Posterior vena cava (tissue), 2 donors: ENCODE measurements at regions of chr11 and their contacts with region 1.

Region 1: GRCh38 chr11:105177658-105178057 is 38.1 kb upstream of the CARD18 start:
- DNase-seq: no peak

Region 2: DNA sequence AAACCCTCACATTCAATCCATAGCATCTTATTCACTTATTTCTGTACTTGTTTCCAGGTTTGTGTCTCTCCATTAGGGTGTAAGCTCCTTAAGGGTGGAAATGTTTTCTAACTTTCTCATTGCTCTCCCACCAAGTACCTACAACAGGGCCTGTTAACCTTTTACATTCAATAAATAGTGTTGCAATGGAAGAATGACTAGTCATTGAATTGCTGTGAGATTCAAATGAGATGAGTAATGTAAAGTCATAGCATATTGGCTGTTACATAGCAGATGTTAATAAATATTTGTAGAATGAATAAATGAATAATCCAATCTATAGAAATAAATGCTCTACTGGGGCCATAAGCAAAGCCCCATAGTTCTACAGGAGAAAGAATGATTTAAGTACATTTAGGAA is 1216.6 kb before region 1 on chr11:
- intact Hi-C with region 1: loop called in 1 of 2 experiments (anchors 10 kb)
- DNase-seq: no peak